ENCODE measurements at regions of chr1 and their contacts with region 1.

Region 1: GRCh38 chr1:166910396-166910994 is 34.4 kb upstream of the TADA1 start:
- DNase-seq: peak; percentile 86
- H3K4me3 Mint-ChIP-seq: no peak overlapping the region
- H3K27ac Mint-ChIP-seq: no peak overlapping the region
- H3K4me1 Mint-ChIP-seq: peaks cover 12% of the 10 kb centered on the region
- H3K27me3 Mint-ChIP-seq: no peaks in the 10 kb centered on the region

Region 2: GRCh38 chr1:166763318-166763717 is 147.2 kb before region 1 on chr1:
- CTCF ChIA-PET with region 1: no interaction called
- POLR2A ChIA-PET with region 1: no interaction called
- intact Hi-C with region 1: no loop called
- DNase-seq: no peak
- H3K4me3 Mint-ChIP-seq: no peak overlapping the region
- H3K27ac Mint-ChIP-seq: no peak overlapping the region
- H3K4me1 Mint-ChIP-seq: no peaks in the 10 kb centered on the region
- H3K27me3 Mint-ChIP-seq: peaks cover 1% of the 10 kb centered on the region

Region 3: DNA sequence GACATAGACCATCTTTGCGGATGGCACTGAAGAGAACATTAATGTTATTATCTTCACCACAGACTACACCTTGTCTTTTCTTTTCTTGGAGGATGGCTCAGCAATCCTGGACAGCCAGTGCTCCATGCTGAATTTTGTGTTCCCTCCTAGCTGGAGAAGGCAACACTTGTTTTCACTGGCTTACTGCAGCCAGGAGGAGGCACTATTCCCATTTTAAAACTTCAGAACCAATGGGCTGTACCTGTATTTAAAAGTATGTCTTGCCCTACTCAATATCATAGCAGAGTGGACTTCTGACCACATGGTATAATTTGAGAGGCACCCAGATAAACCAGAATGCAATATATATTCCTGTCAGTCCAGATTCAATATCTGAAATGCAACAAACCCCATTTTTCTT is 124.5 kb before region 1 on chr1:
- CTCF ChIA-PET with region 1: interaction called, 11 read pairs
- POLR2A ChIA-PET with region 1: no interaction called
- intact Hi-C with region 1: no loop called
- DNase-seq: no peak
- H3K4me3 Mint-ChIP-seq: no peak overlapping the region
- H3K27ac Mint-ChIP-seq: no peak overlapping the region
- H3K4me1 Mint-ChIP-seq: no peaks in the 10 kb centered on the region
- H3K27me3 Mint-ChIP-seq: peaks cover 12% of the 10 kb centered on the region

Region 4: DNA sequence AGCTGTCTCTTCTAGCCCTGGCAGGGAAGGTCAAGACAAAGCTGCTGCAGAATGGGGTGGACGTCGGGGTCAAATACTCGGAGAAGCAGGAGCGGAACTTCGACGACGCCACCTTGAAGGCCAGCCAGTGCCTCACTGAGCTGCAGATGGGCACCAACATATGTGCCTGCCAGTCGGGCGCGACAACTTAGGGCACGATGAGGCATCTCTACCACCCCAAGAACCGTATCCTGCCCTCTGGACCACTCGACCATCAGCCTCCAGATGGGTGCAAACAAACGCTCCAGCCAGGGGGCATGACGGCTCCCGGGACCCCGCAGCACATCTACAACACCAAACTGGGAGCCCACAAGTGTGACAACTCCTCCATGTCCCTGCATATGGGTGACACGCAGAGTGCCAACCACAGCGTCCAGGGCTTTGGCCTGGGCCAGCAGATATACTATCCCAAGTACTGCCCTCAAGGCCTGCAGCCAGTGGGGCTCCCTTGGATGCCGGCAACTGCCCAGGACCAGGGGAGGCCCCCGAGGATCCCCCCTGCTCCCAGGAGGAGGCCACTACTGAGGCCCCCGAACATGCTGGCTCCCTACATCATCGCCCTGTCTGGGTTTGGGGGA is 113.8 kb before region 1 on chr1:
- CTCF ChIA-PET with region 1: no interaction called
- POLR2A ChIA-PET with region 1: no interaction called
- intact Hi-C with region 1: no loop called
- DNase-seq: no peak
- H3K4me3 Mint-ChIP-seq: no peak overlapping the region
- H3K27ac Mint-ChIP-seq: no peak overlapping the region
- H3K4me1 Mint-ChIP-seq: no peaks in the 10 kb centered on the region
- H3K27me3 Mint-ChIP-seq: peaks cover 18% of the 10 kb centered on the region

Region 5: GRCh38 chr1:166859597-166859996 is 50.9 kb before region 1 on chr1:
- CTCF ChIA-PET with region 1: no interaction called
- POLR2A ChIA-PET with region 1: no interaction called
- intact Hi-C with region 1: no loop called
- DNase-seq: no peak
- H3K4me3 Mint-ChIP-seq: no peak overlapping the region
- H3K27ac Mint-ChIP-seq: peak overlapping the region; percentile 9
- H3K4me1 Mint-ChIP-seq: peaks cover 14% of the 10 kb centered on the region
- H3K27me3 Mint-ChIP-seq: no peaks in the 10 kb centered on the region

Region 6: GRCh38 chr1:166875734-166876539 is 34.6 kb before region 1 on chr1 and contains the start of gene TADA1:
- CTCF ChIA-PET with region 1: interaction called, 8 read pairs
- POLR2A ChIA-PET with region 1: interaction called, 8 read pairs
- intact Hi-C with region 1: loop called (anchors 2 kb)
- DNase-seq: peak; percentile 100
- H3K4me3 Mint-ChIP-seq: peak within 1 kb of the TSS; percentile 96
- H3K27ac Mint-ChIP-seq: peak within 1 kb of the TSS; percentile 97
- H3K4me1 Mint-ChIP-seq: peaks cover 47% of the 10 kb centered on the region
- H3K27me3 Mint-ChIP-seq: no peaks in the 10 kb centered on the region
- total RNA-seq, gene TADA1: 16.9 to 18.3 TPM

Region 7: DNA sequence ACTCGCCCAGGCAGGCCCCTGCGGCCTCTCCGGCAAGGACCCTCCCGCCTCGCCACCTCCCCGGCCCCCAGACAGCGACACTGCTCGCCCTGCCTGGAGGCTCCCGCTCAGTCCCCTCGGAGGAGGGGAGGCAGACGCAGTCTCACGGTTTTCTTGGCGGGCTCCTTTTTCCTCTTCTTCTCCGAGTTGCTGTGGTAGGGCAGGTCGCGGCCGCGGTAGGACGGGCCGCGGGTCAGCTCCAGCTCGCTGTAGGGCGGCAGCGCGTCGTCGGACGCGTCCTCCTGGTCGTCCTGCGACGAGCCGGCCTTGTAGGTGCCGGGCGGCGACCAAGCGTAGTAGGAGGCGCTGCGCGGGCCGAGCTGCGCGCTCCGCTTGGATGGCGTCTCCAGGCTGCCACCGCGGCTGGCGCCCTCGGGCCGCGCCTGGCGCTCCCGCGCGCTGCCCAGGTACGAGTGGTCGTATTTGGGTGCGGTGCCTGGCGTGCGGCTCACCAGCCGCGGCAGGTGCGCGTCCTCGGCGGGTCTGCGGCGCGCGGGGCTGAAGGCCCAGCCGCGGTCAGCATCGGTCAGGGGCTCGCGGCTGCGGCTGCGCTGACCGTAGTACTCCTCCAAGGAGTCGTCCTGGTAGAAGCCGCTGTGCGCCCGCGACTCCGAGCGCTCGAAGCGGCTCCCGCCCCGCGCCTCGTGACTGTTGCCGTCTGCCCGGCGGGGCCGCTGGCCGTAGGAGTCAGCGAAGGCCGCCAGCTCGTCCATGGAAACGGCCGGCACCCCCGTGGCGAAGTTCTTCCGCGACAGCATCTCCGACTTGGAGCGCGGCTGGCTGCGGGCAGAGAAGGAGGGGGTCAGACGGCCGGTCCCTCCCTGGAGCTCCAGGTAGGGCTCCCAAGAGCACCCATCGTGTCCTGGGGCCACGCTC is 10.3 kb after region 1 on chr1:
- CTCF ChIA-PET with region 1: interaction called, 14 read pairs
- POLR2A ChIA-PET with region 1: no interaction called
- intact Hi-C with region 1: no loop called
- DNase-seq: no peak
- H3K4me3 Mint-ChIP-seq: no peak overlapping the region
- H3K27ac Mint-ChIP-seq: no peak overlapping the region
- H3K4me1 Mint-ChIP-seq: no peaks in the 10 kb centered on the region
- H3K27me3 Mint-ChIP-seq: peaks cover 27% of the 10 kb centered on the region

Region 8: DNA sequence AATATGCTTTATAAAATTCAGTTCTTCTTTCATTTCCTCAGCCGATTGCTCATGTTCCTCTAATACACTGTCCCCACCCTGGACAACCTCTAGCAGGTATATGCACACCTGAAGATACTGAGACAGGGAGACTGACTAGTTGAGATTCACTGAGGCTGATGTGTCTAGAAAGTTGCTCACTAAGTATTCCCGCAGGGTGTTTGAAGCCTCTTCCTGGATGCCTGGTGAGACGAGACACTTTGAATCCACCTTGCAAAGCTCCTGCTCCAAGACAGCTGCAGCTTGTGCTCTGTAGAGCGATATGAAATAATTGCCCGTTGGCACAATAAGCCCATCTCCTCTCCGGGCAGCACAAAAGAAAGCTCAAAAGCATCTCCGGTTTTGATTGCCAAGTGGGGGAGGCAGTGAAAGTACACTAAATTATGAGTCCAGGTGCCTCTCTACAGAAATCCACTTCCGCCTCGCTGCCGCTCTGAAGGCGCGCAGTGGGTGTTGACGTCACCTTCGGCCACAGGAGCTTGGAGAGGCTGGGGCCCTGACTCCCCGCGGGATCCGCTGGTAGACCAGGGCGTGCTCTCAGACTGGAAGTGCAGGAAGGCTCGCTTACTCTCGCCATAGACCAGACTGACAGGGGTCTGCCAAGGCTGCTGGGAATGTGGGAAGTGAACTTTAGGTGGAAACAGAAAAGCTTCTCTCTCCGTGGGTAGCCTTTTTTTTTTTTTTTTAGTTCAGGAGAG is 133.4 kb after region 1 on chr1:
- CTCF ChIA-PET with region 1: interaction called, 11 read pairs
- POLR2A ChIA-PET with region 1: no interaction called
- intact Hi-C with region 1: loop called (anchors 5 kb)
- DNase-seq: peak; percentile 88
- H3K4me3 Mint-ChIP-seq: peak overlapping the region; percentile 72
- H3K27ac Mint-ChIP-seq: peak overlapping the region; percentile 70
- H3K4me1 Mint-ChIP-seq: peaks cover 15% of the 10 kb centered on the region
- H3K27me3 Mint-ChIP-seq: peaks cover 8% of the 10 kb centered on the region

Region 9: GRCh38 chr1:167121375-167122120 is 211.1 kb after region 1 on chr1:
- CTCF ChIA-PET with region 1: interaction called, 3 read pairs
- POLR2A ChIA-PET with region 1: no interaction called
- intact Hi-C with region 1: loop called (anchors 5 kb)
- DNase-seq: peak; percentile 51
- H3K4me3 Mint-ChIP-seq: peak overlapping the region; percentile 74
- H3K27ac Mint-ChIP-seq: no peak overlapping the region
- H3K4me1 Mint-ChIP-seq: peaks cover 5% of the 10 kb centered on the region
- H3K27me3 Mint-ChIP-seq: no peaks in the 10 kb centered on the region

Region 10: DNA sequence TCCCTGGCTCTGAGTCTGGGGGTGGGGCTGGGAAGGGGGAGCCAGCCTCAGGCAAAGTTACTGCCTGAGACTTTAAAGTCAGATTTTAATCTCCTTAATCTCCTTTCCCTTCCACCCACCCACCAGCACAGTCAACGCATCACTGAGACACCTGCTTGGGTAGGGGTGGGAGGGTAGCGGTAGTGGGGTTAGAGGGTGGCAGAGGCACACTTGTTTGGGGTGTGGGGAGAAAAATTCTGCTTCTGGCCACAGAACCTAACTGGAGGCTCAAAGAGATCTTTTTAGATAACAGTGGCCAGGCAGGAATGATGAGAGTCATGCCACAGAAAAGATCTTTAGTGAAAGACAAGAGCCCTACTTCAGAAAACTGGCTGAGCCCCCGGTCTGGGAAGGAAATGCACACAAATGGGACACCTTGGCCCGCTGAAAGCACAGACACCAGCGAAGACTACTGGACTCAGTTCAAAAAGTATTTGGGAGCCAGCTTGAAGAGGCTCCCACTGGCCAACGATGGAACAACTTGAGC is 563.8 kb after region 1 on chr1:
- CTCF ChIA-PET with region 1: no interaction called
- POLR2A ChIA-PET with region 1: no interaction called
- intact Hi-C with region 1: no loop called
- DNase-seq: peak; percentile 69
- H3K4me3 Mint-ChIP-seq: peak overlapping the region; percentile 27
- H3K27ac Mint-ChIP-seq: peak overlapping the region; percentile 64
- H3K4me1 Mint-ChIP-seq: peaks cover 69% of the 10 kb centered on the region
- H3K27me3 Mint-ChIP-seq: no peaks in the 10 kb centered on the region